ENCODE measurements at regions of chr9 and their contacts with region 1.

Region 1: GRCh38 chr9:107269681-107270080 is 13.4 kb upstream of the RAD23B start:
- H3K4me3 ChIP-seq: no peak overlapping the region
- H3K27ac ChIP-seq: no peak overlapping the region
- H3K4me1 ChIP-seq: no peaks in the 10 kb centered on the region
- CTCF ChIP-seq: no peak

Region 2: DNA sequence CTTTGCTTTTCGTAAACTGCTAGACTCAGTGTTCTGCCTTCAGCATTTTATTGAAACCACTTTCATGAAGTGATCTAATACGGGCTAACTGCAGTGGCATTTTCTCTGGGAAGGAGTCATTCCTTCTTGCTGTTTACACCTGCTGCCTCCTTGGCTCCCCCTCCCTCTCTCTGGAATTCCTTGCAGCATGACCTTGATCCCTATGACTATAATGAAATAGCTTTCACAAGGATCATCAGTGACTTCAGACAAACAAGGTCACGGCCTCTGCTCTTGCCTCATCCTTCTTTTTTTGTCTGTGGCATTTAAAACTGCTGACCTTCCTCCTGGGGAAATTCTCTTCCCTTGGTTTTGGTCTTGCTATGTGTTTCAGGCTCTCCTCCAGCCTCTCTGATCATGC is 316.5 kb before region 1 on chr9:
- CTCF ChIA-PET with region 1: no interaction called
- POLR2A ChIA-PET with region 1: no interaction called
- H3K4me3 ChIP-seq: no peak overlapping the region
- H3K27ac ChIP-seq: no peak overlapping the region
- H3K4me1 ChIP-seq: no peaks in the 10 kb centered on the region
- CTCF ChIP-seq: no peak

Region 3: GRCh38 chr9:107229241-107229741 is 40.4 kb before region 1 on chr9:
- CTCF ChIA-PET with region 1: no interaction called
- POLR2A ChIA-PET with region 1: no interaction called
- H3K4me3 ChIP-seq: no peak overlapping the region
- H3K27ac ChIP-seq: no peak overlapping the region
- H3K4me1 ChIP-seq: no peaks in the 10 kb centered on the region
- CTCF ChIP-seq: no peak

Region 4: DNA sequence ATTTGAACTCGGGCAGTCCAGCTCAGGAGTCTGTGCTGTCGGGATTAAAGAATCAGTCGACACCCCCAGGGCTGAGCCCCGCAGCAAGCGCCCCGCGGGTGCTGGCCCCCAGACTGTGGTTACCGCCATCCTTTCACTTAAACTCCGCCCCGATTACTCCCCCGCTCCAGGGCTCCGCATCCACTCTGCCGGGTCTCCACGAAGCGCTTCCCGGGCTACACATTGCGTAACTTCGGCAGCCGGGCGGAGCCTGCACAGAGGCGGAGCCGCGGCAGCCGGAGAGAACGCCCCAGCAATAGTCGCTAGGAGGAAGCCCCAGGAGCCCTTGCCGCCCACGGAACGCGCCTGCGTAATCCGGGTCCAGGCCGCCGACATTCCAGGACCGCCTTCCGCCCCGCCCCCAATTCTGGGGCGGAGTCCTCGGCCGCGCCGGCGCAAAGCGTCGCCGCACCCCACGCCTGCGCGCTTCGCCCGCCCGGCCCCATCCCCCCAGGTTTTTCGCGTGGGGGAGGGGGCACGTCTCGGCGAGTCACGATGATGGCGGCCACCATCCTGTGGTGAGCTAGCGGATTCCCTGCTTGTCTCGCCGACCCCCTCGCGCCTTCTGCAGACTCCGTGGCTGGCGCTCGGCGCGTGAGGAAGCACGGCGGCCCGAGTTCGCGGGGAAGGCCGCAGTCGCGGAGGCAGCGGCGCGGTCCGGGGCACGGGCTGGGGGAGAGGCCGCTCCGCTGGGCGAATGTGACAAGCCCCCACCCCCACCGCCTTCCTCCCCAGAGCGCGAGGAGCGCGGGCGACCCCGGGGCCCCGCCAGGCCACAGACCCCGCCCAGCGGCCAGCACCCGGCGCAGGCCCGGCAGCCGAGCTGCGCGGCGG is 13.3 kb after region 1 on chr9 and contains the start of gene RAD23B:
- CTCF ChIA-PET with region 1: interaction called, 14 read pairs
- POLR2A ChIA-PET with region 1: interaction called, 3 read pairs
- H3K4me3 ChIP-seq: peak within 1 kb of the TSS; percentile 96
- H3K27ac ChIP-seq: peak within 1 kb of the TSS; percentile 96
- H3K4me1 ChIP-seq: no peaks in the 10 kb centered on the region; the same call in 1 of the 2 replicates
- CTCF ChIP-seq: no peak